ENCODE measurements at regions of chr1 and their contacts with region 1.

Region 1: DNA sequence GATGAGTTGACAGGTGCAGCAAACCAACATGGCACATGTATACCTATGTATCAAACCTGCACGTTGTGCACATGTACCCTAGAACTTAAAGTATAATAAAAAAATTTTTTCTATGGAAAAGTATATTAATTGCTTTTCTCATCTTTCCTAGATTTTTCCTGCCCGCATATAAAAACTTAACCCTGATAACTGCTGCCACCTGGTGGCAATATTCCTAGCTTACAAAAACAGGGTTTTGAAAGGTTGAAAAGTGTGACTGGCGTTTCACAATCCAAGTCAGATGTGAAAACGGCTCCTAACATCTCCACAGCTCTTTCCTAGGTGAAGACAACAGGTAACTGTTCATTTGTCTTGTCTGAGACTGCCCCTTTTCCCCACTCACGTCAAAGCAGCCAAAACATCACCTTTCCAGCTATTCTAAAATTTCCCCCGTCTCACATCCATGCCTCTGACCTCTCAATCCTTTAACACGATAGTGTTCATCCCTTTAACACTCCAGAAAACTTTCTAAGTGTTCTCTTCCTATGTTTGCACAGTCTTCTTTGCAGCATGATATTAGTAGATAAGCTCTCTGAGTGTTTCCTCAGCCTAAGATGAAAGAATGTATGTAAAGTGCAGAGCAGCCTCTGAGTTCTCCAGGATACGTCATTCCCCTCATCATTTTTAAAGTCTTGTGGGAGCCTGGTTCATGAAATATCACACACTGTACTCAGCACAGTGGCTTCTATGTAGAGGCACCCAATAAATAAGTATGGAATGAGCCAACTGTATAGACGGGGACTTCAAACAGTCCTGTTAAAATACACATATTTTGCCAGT is 27.5 kb downstream of the OVGP1 start:
- DNase-seq: peak; percentile 18 to 46
- H3K4me3 ChIP-seq: no peak overlapping the region
- H3K27ac ChIP-seq: no peak overlapping the region
- H3K4me1 ChIP-seq: no peaks in the 10 kb centered on the region
- H3K27me3 ChIP-seq: peaks cover 84% of the 10 kb centered on the region
- CTCF ChIP-seq: peak; percentile 88

Region 2: DNA sequence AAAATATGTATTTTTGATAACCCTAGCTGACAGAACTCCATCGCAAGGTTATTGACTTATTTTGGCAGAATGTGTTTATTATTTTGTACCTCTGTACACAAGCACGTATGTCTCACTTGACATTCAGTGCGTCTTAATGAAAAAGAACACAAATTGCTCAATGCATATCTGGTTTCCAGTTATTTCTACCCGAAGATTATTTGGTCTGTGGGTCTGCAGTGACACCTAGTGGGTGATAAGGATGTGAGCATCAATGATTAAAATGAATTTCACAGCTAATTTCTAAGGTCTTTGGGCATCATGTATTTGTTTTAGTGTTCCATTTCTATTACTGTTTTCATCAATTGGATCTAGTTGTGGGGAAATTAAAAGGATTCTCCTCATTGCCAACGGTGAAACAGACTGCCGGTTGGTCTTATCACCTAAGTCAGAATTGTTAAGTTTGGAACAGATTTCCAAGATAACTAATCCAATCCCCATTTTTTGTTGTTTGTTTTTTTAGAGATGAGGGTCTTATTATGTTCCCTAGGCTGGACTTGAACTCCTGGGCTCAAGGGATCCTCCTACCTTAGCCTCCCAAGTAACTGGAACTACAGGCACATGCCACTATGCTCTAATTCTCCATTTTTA is 369.6 kb after region 1 on chr1:
- CTCF ChIA-PET with region 1: no interaction called
- POLR2A ChIA-PET with region 1: no interaction called
- intact Hi-C with region 1: loop called (anchors 5 kb)
- DNase-seq: peak; percentile 20 to 72
- H3K4me3 ChIP-seq: no peak overlapping the region
- H3K27ac ChIP-seq: no peak overlapping the region
- H3K4me1 ChIP-seq: no peaks in the 10 kb centered on the region
- H3K27me3 ChIP-seq: peaks cover 6% of the 10 kb centered on the region; the same call in 1 of the 2 replicates
- CTCF ChIP-seq: peak; percentile 96

Measured in PC-9 (cell line).